Activated T-helper 1 cell treated with anti-CD3 and anti-CD28 coated beads, Interleukin-12 subunit alpha, Interleukin-12 subunit beta, Interleukin-2, Interleukin-4 antibody, amounts not matched to agents 30 ng/mL and 10 ng/mL and 1 ng/mL, durations not matched to agents 14 hours and 24 hours and 36 hours (primary cell): ENCODE measurements at regions of chr16 and their contacts with region 1.

Region 1: DNA sequence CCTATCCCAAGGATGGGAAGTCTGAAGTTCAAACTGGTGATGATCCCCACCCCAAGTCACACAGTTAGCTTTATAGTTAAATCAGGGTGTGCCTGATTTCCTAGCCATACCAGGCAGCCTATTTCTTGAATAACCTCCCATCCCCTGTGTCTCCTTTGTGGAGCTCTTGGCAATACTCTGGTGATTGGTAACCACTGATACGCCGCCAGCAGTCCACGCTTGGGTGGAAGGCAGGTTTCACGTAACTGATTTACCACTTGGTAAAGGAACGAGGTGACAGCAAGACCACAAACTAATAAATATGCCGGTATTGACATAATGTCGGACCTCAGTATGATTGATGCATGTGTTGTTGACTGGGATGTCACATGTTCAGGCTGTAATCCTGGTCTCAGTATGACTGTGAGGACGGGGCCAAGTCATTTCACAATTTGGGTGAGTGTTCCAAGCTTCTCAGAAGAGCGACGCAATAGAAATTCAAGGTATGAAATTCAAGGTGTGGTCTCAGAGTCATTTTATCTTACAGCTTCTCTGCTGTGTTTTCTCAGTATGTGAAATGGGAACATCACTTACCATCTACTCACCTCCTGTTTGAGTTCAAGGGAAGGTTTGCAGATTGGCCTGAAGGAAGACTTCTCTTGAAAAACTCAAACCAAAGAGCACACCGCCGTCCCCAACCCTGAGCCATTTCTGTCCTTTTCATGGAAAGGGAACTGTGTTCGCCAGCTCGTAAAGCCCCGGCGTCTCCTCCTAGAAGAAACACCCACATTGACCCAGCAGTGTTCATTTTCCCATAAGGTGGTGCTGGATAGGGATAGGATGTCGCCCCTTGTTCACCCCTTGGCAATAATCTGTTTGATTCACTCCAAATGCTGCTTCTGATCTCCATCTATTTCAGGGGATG is 678.9 kb downstream of the WWOX start:
- DNase-seq: peak; percentile 63
- H3K4me3 Mint-ChIP-seq: peak overlapping the region; percentile 57
- H3K27ac Mint-ChIP-seq: peak overlapping the region; percentile 77
- H3K4me1 Mint-ChIP-seq: peaks cover 73% of the 10 kb centered on the region
- H3K27me3 Mint-ChIP-seq: no peaks in the 10 kb centered on the region

Region 2: GRCh38 chr16:78761427-78761826 is 16.9 kb before region 1 on chr16:
- intact Hi-C with region 1: loop called (anchors 1 kb)
- DNase-seq: no peak
- H3K4me3 Mint-ChIP-seq: no peak overlapping the region
- H3K27ac Mint-ChIP-seq: no peak overlapping the region
- H3K4me1 Mint-ChIP-seq: no peaks in the 10 kb centered on the region
- H3K27me3 Mint-ChIP-seq: peaks cover 4% of the 10 kb centered on the region

Region 3: GRCh38 chr16:78892951-78893733 is 114.8 kb after region 1 on chr16:
- intact Hi-C with region 1: loop called (anchors 1 kb)
- DNase-seq: no peak
- H3K4me3 Mint-ChIP-seq: no peak overlapping the region
- H3K27ac Mint-ChIP-seq: peak overlapping the region; percentile 84
- H3K4me1 Mint-ChIP-seq: peaks cover 55% of the 10 kb centered on the region
- H3K27me3 Mint-ChIP-seq: no peaks in the 10 kb centered on the region

Region 4: DNA sequence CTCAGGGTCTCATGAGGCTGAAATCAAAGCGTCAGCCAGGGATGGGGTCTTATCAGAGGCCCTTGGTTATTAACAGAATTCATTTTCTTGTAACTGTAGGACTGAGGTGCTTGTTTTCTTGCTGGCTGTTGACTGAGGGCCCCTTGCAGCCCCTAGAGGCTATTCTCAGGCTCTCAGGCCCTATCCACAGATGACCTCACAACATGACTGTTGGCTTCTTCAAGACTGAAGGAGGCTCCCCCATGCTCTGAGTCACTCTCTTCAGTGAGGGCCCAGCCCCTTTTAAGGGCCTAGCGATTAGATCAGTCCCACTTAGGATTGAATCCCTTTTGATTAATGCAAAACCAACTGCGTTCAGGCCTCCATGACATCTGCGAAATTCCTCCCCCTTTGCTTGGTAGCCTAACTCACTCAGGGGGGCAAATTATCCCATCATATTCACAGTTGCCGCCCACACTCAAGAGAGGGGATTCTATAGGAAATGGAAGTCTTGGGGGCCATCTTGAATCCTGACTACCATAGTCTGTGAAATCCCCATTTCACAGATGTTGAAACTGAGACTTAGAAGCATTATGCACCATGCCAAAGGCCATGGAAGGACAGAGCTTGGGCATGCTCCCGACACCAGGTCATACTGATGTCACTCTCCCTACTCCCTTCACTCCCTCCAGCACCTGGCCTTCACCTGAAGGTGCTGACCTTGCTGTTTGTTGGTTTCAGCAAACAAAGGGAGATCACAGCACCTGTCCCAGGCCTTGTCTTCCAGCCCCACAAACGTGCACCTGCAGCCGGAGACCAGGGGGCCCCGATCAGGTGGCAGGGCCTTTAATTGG is 229.9 kb after region 1 on chr16:
- intact Hi-C with region 1: loop called (anchors 5 kb)
- DNase-seq: no peak
- H3K4me3 Mint-ChIP-seq: no peak overlapping the region
- H3K27ac Mint-ChIP-seq: no peak overlapping the region
- H3K4me1 Mint-ChIP-seq: peaks cover under 1% of the 10 kb centered on the region
- H3K27me3 Mint-ChIP-seq: no peaks in the 10 kb centered on the region

Region 5: GRCh38 chr16:79217375-79218011 is 439.1 kb after region 1 on chr16:
- intact Hi-C with region 1: loop called (anchors 2 kb)
- DNase-seq: peak; percentile 19
- H3K4me3 Mint-ChIP-seq: no peak overlapping the region
- H3K27ac Mint-ChIP-seq: no peak overlapping the region
- H3K4me1 Mint-ChIP-seq: peaks cover 19% of the 10 kb centered on the region
- H3K27me3 Mint-ChIP-seq: no peaks in the 10 kb centered on the region

Region 6: GRCh38 chr16:79628501-79628975 is 850.2 kb after region 1 on chr16:
- intact Hi-C with region 1: loop called (anchors 1 kb)
- DNase-seq: peak; percentile 77
- H3K4me3 Mint-ChIP-seq: peak overlapping the region; percentile 68
- H3K27ac Mint-ChIP-seq: peak overlapping the region; percentile 93
- H3K4me1 Mint-ChIP-seq: peaks cover 77% of the 10 kb centered on the region
- H3K27me3 Mint-ChIP-seq: peaks cover 8% of the 10 kb centered on the region